ENCODE measurements at regions of chr7 and their contacts with region 1.

Region 1: DNA sequence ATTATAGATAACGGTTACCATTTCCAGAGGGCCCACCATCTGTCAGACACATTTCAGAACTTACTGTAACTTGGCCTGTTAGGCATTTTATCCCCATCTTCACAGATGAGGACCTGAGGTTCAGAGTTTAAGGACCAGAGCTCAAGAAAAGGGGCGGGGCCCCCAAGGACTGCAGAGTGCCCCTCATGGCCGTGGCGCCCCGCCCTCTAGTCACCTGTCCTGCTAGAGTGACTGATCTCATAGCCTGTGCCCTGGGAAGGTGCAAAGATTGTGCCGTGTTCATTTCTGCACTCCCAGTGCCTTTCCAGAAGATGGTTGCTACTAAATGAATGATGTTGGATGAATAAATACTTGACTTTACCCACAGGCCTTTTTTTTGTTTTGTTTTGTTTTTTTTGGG is 107.0 kb downstream of the XRCC2 start:
- DNase-seq: no peak
- ATAC-seq: no peak

Region 2: DNA sequence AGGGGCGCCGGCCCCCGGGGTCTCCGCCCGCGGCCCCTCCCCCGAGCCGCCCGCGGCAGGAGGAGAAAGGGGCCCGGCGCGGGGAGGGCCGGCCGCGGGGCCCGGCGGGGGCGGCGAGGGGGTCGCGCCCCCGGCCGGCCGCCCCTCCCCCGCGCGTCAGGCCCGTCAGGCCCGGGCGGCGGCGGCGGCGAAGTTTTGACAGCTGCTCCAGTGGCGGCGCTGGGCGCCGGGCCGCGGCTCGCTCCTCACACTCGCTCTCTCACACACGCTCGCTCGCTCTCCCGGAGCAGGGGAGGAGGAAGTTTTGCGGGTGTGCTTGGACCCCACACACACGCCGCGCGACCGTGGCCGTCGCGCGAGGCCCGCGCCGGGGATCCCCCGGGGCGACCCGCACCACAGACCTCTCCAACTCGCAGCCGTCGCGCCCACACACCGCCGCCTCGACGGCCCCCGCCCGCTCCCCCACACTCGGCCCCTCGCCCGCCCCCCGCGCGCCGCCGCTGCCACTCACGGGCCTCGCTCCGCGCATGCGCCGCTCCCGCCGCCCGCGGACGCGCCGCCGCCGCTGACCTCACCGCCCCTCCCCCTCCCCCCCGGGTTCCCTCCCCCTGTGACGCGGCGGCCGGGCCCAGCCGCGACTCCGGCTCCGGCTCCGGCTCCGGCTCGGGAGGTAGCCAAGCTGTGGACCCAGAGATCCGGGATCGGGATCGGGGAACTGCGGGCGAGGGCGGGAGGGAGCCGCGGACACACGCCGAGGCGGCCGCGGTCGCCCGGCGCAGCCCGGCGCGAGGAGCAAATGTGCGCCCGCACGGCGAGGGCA is 132.7 kb before region 1 on chr7:
- intact Hi-C with region 1: no loop called
- DNase-seq: peak; percentile 94
- ATAC-seq: peak; percentile 86 to 87

Region 3: DNA sequence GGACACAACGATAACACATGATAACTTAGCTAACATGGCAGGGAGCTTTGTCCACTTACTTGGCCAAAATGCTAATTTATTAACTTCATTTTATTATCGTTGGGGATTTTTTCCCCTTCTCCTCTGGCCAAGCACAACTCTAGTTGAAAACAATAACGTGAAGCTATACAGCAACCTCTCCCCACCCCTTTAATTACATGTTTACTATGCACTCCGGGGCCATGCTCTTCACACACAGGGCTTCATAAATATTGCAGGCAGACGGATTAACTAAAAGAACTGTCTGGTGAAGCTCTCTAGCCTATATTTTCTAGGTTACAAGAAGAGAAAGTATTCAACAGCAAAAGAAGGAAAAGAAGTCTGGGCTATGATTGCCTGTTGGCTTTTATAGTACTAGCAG is 55.3 kb after region 1 on chr7:
- intact Hi-C with region 1: loop called in 1 of 2 experiments (anchors 10 kb)
- DNase-seq: no peak
- ATAC-seq: no peak

Region 4: GRCh38 chr7:152675759-152676636 is 107.0 kb after region 1 on chr7 and contains the start of gene XRCC2:
- intact Hi-C with region 1: no loop called
- DNase-seq: peak; percentile 91
- ATAC-seq: peak; percentile 99 to 100
- total RNA-seq, gene XRCC2: 0.31 to 1.4 TPM